WTC11 (cell line): ENCODE measurements at regions of chr21 and their contacts with region 1.

Region 1: GRCh38 chr21:27564684-27565301 is 597.9 kb upstream of the ADAMTS5 start:
- DNase-seq: peak; percentile 40
- ATAC-seq: peak; percentile 90
- H3K4me3 Mint-ChIP-seq: no peak overlapping the region
- H3K27ac Mint-ChIP-seq: no peak overlapping the region
- H3K4me1 Mint-ChIP-seq: peaks cover under 1% of the 10 kb centered on the region
- H3K27me3 Mint-ChIP-seq: no peaks in the 10 kb centered on the region
- CTCF ChIP-seq: 0 out of 2 replicates have a peak, but pooled peaks have one; percentile 27

Region 2: DNA sequence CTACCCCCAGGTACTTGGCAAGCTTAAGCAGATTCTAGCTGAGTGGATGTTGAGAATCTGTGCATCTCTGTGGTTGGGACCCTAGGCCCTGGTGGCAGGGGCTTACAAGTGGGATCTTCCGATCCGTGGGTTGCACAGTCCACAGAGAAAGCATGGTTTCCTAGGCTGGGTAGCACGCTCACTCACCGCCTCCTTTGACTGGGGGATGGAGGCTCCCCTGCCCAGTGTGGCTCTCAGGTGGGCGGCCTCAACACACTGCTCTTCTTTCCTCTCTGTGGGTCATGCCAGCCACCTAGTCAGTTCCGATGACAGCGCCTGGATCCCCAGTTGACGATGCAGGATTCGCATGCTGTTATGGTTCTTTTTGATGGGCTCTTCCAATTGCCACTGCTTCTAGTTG is 41.6 kb after region 1 on chr21:
- CTCF ChIA-PET with region 1: no interaction called
- POLR2A ChIA-PET with region 1: no interaction called
- DNase-seq: no peak
- ATAC-seq: no peak
- H3K4me3 Mint-ChIP-seq: no peak overlapping the region
- H3K27ac Mint-ChIP-seq: no peak overlapping the region
- H3K4me1 Mint-ChIP-seq: no peaks in the 10 kb centered on the region
- H3K27me3 Mint-ChIP-seq: no peaks in the 10 kb centered on the region
- CTCF ChIP-seq: no peak

Region 3: GRCh38 chr21:27690426-27690825 is 125.6 kb after region 1 on chr21:
- CTCF ChIA-PET with region 1: no interaction called
- POLR2A ChIA-PET with region 1: no interaction called
- DNase-seq: no peak
- ATAC-seq: no peak
- H3K4me3 Mint-ChIP-seq: no peak overlapping the region
- H3K27ac Mint-ChIP-seq: no peak overlapping the region
- H3K4me1 Mint-ChIP-seq: peaks cover 19% of the 10 kb centered on the region
- H3K27me3 Mint-ChIP-seq: no peaks in the 10 kb centered on the region
- CTCF ChIP-seq: no peak

Region 4: GRCh38 chr21:27700974-27701614 is 136.3 kb after region 1 on chr21:
- CTCF ChIA-PET with region 1: interaction called, 14 read pairs
- POLR2A ChIA-PET with region 1: no interaction called
- DNase-seq: peak; percentile 81
- ATAC-seq: peak; percentile 86
- H3K4me3 Mint-ChIP-seq: no peak overlapping the region
- H3K27ac Mint-ChIP-seq: no peak overlapping the region
- H3K4me1 Mint-ChIP-seq: no peaks in the 10 kb centered on the region
- H3K27me3 Mint-ChIP-seq: no peaks in the 10 kb centered on the region
- CTCF ChIP-seq: peak; percentile 75